ENCODE measurements at regions of chr17 and their contacts with region 1.

Region 1: GRCh38 chr17:64635647-64636307 is 26.3 kb downstream of the SMURF2 start:
- DNase-seq: peak; percentile 35
- H3K4me3 Mint-ChIP-seq: peak overlapping the region; percentile 13
- H3K27ac Mint-ChIP-seq: peak overlapping the region; percentile 83
- H3K4me1 Mint-ChIP-seq: peaks cover 45% of the 10 kb centered on the region
- H3K27me3 Mint-ChIP-seq: no peaks in the 10 kb centered on the region

Region 2: DNA sequence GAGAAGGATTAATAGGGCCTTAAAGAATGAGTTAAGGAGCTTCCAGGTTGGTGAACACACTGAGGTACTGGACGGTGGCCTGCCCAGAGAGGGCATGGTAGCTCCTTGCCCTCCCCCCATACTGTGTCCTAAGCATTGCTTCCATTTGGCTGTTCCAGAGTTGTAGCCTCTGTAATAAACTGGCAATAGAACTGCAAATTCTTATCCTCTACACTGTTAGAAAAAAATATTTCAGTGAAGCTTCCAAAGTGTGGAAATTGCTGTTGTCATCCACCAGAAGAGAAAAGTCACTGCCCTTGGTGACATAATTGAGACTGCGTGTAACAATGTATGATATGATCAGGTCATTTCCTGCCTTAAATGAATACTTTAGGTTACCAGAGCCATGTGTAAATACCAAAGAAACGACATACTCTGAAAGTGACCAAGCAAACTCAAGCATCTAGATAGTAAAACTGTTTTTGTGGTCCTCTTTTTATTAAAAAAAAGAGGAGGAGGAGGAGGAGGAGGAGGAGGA is 63.1 kb before region 1 on chr17:
- CTCF ChIA-PET with region 1: interaction called, 4 read pairs
- POLR2A ChIA-PET with region 1: no interaction called
- intact Hi-C with region 1: loop called (anchors 1 kb)
- DNase-seq: no peak
- H3K4me3 Mint-ChIP-seq: no peak overlapping the region
- H3K27ac Mint-ChIP-seq: peak overlapping the region; percentile 83
- H3K4me1 Mint-ChIP-seq: peaks cover 11% of the 10 kb centered on the region
- H3K27me3 Mint-ChIP-seq: no peaks in the 10 kb centered on the region

Region 3: DNA sequence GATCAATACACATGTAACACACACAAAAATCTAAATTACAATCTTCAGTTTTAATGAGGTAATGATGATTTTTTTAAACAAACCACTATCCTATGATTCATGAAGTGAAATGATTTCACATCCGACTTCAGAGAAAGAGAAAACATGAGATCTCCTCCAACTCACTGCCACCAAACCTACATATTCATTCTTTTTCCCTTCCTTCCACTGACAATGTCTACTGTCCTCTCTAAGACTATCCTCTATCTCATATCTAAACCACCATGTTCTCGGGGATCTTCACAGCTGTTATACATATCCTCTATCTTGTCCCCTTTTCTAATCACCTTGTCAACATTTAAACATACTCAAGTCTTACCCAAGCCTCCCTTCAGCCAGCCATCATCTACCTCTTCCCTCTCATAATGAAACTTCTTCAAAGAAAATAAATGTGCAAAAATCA is 27.2 kb before region 1 on chr17:
- CTCF ChIA-PET with region 1: no interaction called
- POLR2A ChIA-PET with region 1: no interaction called
- intact Hi-C with region 1: loop called (anchors 1 kb)
- DNase-seq: no peak
- H3K4me3 Mint-ChIP-seq: peak overlapping the region; percentile 28
- H3K27ac Mint-ChIP-seq: peak overlapping the region; percentile 78
- H3K4me1 Mint-ChIP-seq: peaks cover 34% of the 10 kb centered on the region
- H3K27me3 Mint-ChIP-seq: no peaks in the 10 kb centered on the region

Region 4: GRCh38 chr17:64615028-64615677 is 20.6 kb before region 1 on chr17:
- CTCF ChIA-PET with region 1: no interaction called
- POLR2A ChIA-PET with region 1: interaction called, 3 read pairs
- intact Hi-C with region 1: loop called (anchors 2 kb)
- DNase-seq: no peak
- H3K4me3 Mint-ChIP-seq: no peak overlapping the region
- H3K27ac Mint-ChIP-seq: no peak overlapping the region
- H3K4me1 Mint-ChIP-seq: peaks cover 24% of the 10 kb centered on the region
- H3K27me3 Mint-ChIP-seq: no peaks in the 10 kb centered on the region

Region 5: DNA sequence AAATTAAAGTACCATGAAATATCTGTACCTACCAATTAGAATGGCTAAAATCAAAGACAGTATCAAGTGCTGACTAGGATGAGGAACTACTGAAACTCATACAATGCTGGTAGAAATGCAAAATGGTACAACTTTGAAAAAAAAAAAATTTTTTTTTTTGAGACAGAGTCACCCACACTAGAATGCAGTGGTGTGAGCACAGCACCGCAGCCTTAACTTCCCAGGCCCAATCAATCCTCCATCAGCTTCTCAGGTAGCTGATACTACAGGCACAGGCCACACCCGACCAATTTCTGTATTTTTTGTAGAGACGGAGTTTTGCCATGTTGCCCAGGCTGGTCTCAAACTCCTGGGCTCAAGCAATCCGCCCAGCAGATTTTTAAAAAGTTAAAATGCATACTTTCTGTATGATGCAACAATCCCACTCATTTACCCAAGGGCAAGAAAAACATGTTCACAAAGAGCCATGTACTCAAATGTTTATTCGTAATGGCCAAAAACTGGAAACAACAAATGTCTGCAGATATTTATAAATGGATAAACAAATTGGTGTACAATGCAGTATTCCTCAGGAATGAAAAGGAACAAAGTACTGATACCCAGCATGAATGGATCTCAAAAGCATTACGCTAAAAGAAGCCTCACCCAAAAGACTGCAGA is 17.7 kb after region 1 on chr17:
- CTCF ChIA-PET with region 1: interaction called, 18 read pairs
- POLR2A ChIA-PET with region 1: interaction called, 3 read pairs
- intact Hi-C with region 1: loop called (anchors 1 kb)
- DNase-seq: no peak
- H3K4me3 Mint-ChIP-seq: no peak overlapping the region
- H3K27ac Mint-ChIP-seq: no peak overlapping the region
- H3K4me1 Mint-ChIP-seq: peaks cover 40% of the 10 kb centered on the region
- H3K27me3 Mint-ChIP-seq: no peaks in the 10 kb centered on the region